ENCODE measurements at regions of chr1 and their contacts with region 1.

Region 1: DNA sequence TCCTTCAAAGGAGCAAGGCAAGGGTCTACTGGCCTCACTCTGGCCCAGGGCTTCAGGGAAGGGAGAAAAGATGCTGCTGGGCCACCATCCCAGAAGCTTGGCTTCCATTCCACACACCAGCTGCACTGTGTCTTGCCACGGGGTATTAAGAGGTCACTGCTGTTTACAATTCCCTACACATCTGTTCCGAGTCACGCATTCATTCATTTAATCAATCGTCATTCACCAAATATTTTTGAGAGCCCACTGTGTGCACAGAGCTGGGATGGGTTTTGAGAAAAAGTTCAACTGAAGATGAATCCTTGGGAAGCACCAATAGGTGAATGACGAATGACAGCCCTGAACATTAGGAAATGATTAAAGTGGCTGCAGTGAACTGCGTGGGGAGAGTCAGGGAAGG is 101.7 kb downstream of the NAV1 start:
- DNase-seq: peak in 1 of 10 donors; percentile 50
- H3K4me3 ChIP-seq: no peak overlapping the region
- H3K27ac ChIP-seq: no peak overlapping the region
- H3K27me3 ChIP-seq: no peaks in the 10 kb centered on the region
- CTCF ChIP-seq: no peak

Region 2: GRCh38 chr1:201666102-201666501 is 25.5 kb after region 1 on chr1:
- intact Hi-C with region 1: loop called in 1 of 2 experiments (anchors 2 kb)
- DNase-seq: no peak
- H3K4me3 ChIP-seq: no peak overlapping the region
- H3K27ac ChIP-seq: peak overlapping the region in 52 of 59 donors; percentile 9 to 84 (median 68)
- H3K27me3 ChIP-seq: no peaks in the 10 kb centered on the region
- CTCF ChIP-seq: no peak

Region 3: GRCh38 chr1:201678264-201679101 is 37.9 kb after region 1 on chr1:
- intact Hi-C with region 1: no loop called
- DNase-seq: no peak
- H3K4me3 ChIP-seq: no peak overlapping the region
- H3K27ac ChIP-seq: peak overlapping the region in 1 of 59 donors; percentile 35
- H3K27me3 ChIP-seq: no peaks in the 10 kb centered on the region
- CTCF ChIP-seq: no peak

Region 4: DNA sequence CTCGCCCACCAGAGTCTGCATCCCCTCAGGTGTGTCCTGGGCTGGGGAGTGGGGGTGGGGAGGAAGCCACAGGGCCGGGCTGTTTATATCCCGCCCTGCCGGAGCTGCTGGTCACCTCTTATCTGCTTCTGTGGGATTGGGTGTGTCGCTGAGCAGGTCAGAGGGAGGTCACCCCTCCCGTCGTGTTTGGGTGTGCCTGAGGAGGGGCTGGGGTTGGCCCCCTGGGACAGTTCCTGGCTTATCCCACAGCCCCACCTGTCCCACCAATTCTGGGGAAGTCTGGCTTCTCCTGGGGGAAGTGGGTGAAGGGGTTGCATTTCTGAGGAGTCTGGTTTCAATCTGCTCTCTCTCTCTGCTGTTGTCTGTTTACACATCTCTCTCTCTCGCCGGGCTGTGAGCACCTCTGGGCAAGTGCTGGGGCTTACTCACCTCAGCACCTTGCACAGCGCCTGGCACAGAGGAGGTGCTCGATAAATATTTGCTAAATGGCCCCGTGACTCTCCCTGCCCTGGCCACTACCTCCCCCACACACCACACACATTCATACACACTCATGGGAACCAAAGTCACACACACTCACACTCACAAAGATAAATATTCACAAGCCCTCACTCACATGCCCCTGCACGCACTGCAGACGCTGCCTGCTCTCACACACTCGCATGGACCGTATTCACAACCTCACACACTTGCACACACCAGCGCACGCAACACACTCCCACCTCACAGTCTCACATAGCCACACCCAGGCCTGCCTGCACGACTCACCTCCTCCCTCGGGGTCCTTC is 378.0 kb after region 1 on chr1:
- intact Hi-C with region 1: no loop called
- DNase-seq: no peak
- H3K4me3 ChIP-seq: no peak overlapping the region
- H3K27ac ChIP-seq: no peak overlapping the region
- H3K27me3 ChIP-seq: no peaks in the 10 kb centered on the region
- CTCF ChIP-seq: no peak

Measured in dorsolateral prefrontal cortex (tissue), 120 donors.